WTC11 (cell line): ENCODE measurements at regions of chr19 and their contacts with region 1.

Region 1: DNA sequence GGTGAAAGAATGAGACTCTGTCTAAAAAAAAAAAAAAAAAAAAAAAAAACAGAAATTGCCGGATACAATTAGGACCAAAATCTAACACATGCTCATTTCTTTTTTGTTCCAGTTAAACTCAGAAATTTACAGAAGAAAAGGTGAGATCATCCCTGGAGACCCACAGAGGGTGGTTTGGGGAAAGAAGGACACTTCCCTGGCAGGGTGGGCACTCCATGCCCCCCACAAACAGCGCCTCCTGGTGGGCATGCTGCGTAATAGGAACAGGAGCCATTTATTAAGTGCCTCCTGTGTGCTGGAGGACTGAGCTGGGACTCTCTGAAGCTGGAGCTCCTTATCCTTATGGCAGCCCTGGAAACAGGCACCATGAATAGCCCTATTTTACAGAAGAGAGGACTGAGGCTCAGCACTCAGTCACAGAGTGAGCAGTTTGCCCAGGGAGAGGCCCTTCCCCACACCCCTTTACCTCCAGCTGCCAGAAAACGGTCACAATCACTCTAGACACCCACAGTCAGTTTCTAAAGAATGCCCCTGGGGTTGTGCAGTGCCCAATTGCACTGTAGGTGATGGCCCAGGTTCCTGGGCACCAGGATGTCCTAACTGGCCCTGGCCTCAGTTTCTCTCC is 10.1 kb downstream of the C19orf38 start:
- DNase-seq: peak; percentile 64
- ATAC-seq: peak; percentile 63
- H3K4me3 Mint-ChIP-seq: no peak overlapping the region
- H3K27ac Mint-ChIP-seq: no peak overlapping the region
- H3K4me1 Mint-ChIP-seq: no peaks in the 10 kb centered on the region
- H3K27me3 Mint-ChIP-seq: peaks cover 2% of the 10 kb centered on the region; the same call in 1 of the 2 replicates
- CTCF ChIP-seq: peak; percentile 95

Region 2: GRCh38 chr19:10820173-10820572 is 38.1 kb before region 1 on chr19:
- CTCF ChIA-PET with region 1: interaction called, 22 read pairs
- POLR2A ChIA-PET with region 1: no interaction called
- DNase-seq: no peak
- ATAC-seq: peak; percentile 73
- H3K4me3 Mint-ChIP-seq: no peak overlapping the region
- H3K27ac Mint-ChIP-seq: no peak overlapping the region
- H3K4me1 Mint-ChIP-seq: no peaks in the 10 kb centered on the region
- H3K27me3 Mint-ChIP-seq: no peaks in the 10 kb centered on the region; the same call in 1 of the 2 replicates
- CTCF ChIP-seq: no peak

Region 3: GRCh38 chr19:10835754-10836477 is 22.4 kb before region 1 on chr19 and contains the start of gene TMED1:
- CTCF ChIA-PET with region 1: interaction called, 135 read pairs
- POLR2A ChIA-PET with region 1: no interaction called
- DNase-seq: peak; percentile 100
- ATAC-seq: peak; percentile 93
- H3K4me3 Mint-ChIP-seq: peak within 1 kb of the TSS; percentile 85
- H3K27ac Mint-ChIP-seq: peak within 1 kb of the TSS; percentile 100
- H3K4me1 Mint-ChIP-seq: peaks cover 13% of the 10 kb centered on the region
- H3K27me3 Mint-ChIP-seq: peaks cover 24% of the 10 kb centered on the region
- CTCF ChIP-seq: peak; percentile 36; the same call in 1 of the 2 replicates
- total RNA-seq, gene TMED1: 28.5 to 40.9 TPM (median 40.6 TPM) in 3 replicates

Region 4: DNA sequence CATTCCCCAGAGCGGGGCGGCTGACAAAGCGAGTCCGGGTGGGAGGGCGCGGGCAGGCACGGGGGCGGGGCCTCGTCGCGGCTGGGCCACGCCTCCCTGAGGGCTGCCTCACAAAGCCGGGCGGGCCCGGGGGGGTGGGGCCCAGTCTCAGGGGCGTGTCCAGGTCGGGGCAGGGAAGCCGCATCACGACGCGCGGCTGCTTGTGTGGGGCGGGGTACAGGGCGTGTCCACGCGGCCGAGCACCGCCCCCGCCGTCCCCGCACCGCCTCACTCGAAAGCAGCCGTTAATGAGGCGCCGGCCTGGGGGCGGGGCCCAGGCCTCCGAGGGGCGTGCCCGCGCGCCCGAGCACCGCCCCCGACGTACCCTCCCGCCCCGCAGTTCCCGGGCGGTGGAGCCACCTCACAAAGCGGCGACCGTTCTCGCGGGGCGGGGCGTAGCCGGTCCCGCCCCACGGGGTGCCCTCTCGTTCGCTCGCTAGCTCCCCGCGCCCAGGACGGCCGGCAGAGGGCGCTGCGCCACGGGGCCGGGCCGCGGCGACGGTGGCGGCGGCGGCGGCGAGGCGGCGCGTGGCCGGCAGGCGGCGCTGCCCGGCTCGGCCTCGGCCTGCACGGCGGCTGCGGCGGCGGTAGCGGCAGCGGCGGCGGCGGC is 12.8 kb after region 1 on chr19 and contains the start of gene CARM1:
- CTCF ChIA-PET with region 1: interaction called, 75 read pairs
- POLR2A ChIA-PET with region 1: no interaction called
- DNase-seq: peak; percentile 99
- ATAC-seq: peak; percentile 90
- H3K4me3 Mint-ChIP-seq: peak within 1 kb of the TSS; percentile 90
- H3K27ac Mint-ChIP-seq: peak within 1 kb of the TSS; percentile 93
- H3K4me1 Mint-ChIP-seq: peaks cover 23% of the 10 kb centered on the region
- H3K27me3 Mint-ChIP-seq: no peaks in the 10 kb centered on the region; the same call in 1 of the 2 replicates
- CTCF ChIP-seq: peak; percentile 56
- total RNA-seq, gene CARM1: 125 to 126 TPM (median 126 TPM) in 3 replicates

Region 5: GRCh38 chr19:10891405-10892086 is 33.2 kb after region 1 on chr19:
- CTCF ChIA-PET with region 1: interaction called, 15 read pairs
- POLR2A ChIA-PET with region 1: no interaction called
- DNase-seq: no peak
- ATAC-seq: peak; percentile 6; the same call in 1 of the 2 replicates
- H3K4me3 Mint-ChIP-seq: peak overlapping the region; percentile 20
- H3K27ac Mint-ChIP-seq: peak overlapping the region; percentile 94
- H3K4me1 Mint-ChIP-seq: peaks cover 70% of the 10 kb centered on the region
- H3K27me3 Mint-ChIP-seq: no peaks in the 10 kb centered on the region
- CTCF ChIP-seq: no peak